ENCODE measurements at regions of chr9 and their contacts with region 1.

Region 1: GRCh38 chr9:34701769-34702736 is 7.9 kb downstream of the CCL21 start:
- DNase-seq: peak; percentile 84
- ATAC-seq: peak; percentile 79
- H3K4me3 Mint-ChIP-seq: peak overlapping the region; percentile 69
- H3K27ac Mint-ChIP-seq: peak overlapping the region; percentile 17
- H3K4me1 Mint-ChIP-seq: peaks cover 8% of the 10 kb centered on the region
- H3K27me3 Mint-ChIP-seq: peaks cover 40% of the 10 kb centered on the region

Region 2: GRCh38 chr9:34646211-34647083 is 55.6 kb before region 1 on chr9 and contains the start of gene GALT:
- CTCF ChIA-PET with region 1: interaction called, 30 read pairs
- DNase-seq: peak; percentile 98
- ATAC-seq: peak; percentile 88
- H3K4me3 Mint-ChIP-seq: peak within 1 kb of the TSS; percentile 92
- H3K27ac Mint-ChIP-seq: peak within 1 kb of the TSS; percentile 87
- H3K4me1 Mint-ChIP-seq: peaks cover 24% of the 10 kb centered on the region
- H3K27me3 Mint-ChIP-seq: no peaks in the 10 kb centered on the region
- total RNA-seq, gene GALT: 61.0 to 71.3 TPM

Region 3: GRCh38 chr9:34665381-34666250 is 36.4 kb before region 1 on chr9:
- CTCF ChIA-PET with region 1: interaction called, 60 read pairs
- DNase-seq: peak; percentile 94
- ATAC-seq: peak; percentile 83
- H3K4me3 Mint-ChIP-seq: peak overlapping the region; percentile 80
- H3K27ac Mint-ChIP-seq: peak overlapping the region; percentile 90
- H3K4me1 Mint-ChIP-seq: peaks cover 29% of the 10 kb centered on the region
- H3K27me3 Mint-ChIP-seq: no peaks in the 10 kb centered on the region

Region 4: GRCh38 chr9:34675048-34675714 is 26.9 kb before region 1 on chr9:
- CTCF ChIA-PET with region 1: interaction called, 20 read pairs
- DNase-seq: peak; percentile 71
- ATAC-seq: peak; percentile 75
- H3K4me3 Mint-ChIP-seq: no peak overlapping the region
- H3K27ac Mint-ChIP-seq: no peak overlapping the region
- H3K4me1 Mint-ChIP-seq: no peaks in the 10 kb centered on the region
- H3K27me3 Mint-ChIP-seq: no peaks in the 10 kb centered on the region

Region 5: GRCh38 chr9:34690983-34691935 is 10.8 kb before region 1 on chr9 and contains the start of gene CCL19:
- CTCF ChIA-PET with region 1: interaction called, 15 read pairs
- DNase-seq: no peak
- ATAC-seq: no peak
- H3K4me3 Mint-ChIP-seq: no peak within 1 kb of the TSS
- H3K27ac Mint-ChIP-seq: no peak within 1 kb of the TSS
- H3K4me1 Mint-ChIP-seq: no peaks in the 10 kb centered on the region
- H3K27me3 Mint-ChIP-seq: no peaks in the 10 kb centered on the region
- total RNA-seq, gene CCL19: not detected

Region 6: GRCh38 chr9:34717996-34718614 is 16.1 kb after region 1 on chr9:
- CTCF ChIA-PET with region 1: interaction called, 25 read pairs
- DNase-seq: no peak
- ATAC-seq: no peak
- H3K4me3 Mint-ChIP-seq: no peak overlapping the region
- H3K27ac Mint-ChIP-seq: no peak overlapping the region
- H3K4me1 Mint-ChIP-seq: no peaks in the 10 kb centered on the region
- H3K27me3 Mint-ChIP-seq: peaks cover 9% of the 10 kb centered on the region